SK-N-SH (cell line): ENCODE measurements at regions of chr14 and their contacts with region 1.

Region 1: DNA sequence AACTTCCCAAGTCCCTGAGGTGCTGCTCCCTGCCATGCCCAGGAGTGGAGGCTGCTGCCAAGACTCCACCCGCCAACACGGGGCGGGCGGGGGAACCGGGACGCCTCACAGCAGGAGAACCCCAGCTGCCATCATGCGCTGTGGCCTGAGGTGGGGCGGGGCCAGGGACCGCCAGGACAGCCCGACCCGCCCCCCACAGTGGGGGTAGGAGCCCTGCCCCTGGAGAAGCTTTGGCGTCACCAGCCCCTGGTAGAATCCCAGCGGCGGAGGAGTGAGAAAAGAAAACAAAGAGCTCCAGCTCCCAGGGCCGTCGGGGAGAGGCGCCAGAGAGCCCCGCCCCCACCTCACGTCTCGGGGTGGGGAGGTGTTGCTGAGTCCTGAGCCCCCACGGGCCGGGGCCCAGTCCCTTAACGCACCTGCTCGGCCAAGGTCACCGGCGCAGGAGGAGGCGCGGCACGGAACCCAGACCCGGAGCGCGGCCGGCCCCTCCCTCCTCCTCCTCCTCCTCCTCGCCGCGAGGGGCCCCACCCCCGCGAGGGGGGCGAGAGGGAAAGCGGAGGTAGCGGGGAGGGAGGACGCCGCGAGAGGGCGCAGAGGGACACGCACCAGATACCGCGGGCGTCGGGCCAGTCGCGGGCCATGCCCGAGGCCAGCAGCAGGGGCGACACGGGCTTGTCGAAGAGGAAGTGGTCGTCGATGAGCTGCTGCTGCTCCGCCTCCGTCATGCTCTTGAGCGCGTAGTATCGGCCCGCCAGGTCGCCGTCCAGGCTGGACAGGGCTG is 1.8 kb downstream of the CKB start:
- DNase-seq: peak; percentile 92
- H3K4me3 ChIP-seq: peak overlapping the region; percentile 35 to 57; a peak in 3 of 4 replicates
- H3K27ac ChIP-seq: peak overlapping the region in 1 of 2 experiments; percentile 74; a peak in 2 of 4 replicates
- H3K4me1 ChIP-seq: peaks cover 0 to 20% of the 10 kb centered on the region in 2 experiments; a peak in 1 of 4 replicates
- H3K27me3 ChIP-seq: peaks cover 16% of the 10 kb centered on the region
- CTCF ChIP-seq: peak; percentile 41
- EP300 ChIP-seq: no peak
- RAD21 ChIP-seq: peak; percentile 36; the same call in 1 of the 2 replicates

Region 2: GRCh38 chr14:103488960-103489359 is 31.9 kb before region 1 on chr14:
- CTCF ChIA-PET with region 1: interaction called, 12 read pairs
- POLR2A ChIA-PET with region 1: no interaction called
- DNase-seq: no peak
- H3K4me3 ChIP-seq: no peak overlapping the region
- H3K27ac ChIP-seq: no peak overlapping the region
- H3K4me1 ChIP-seq: peaks cover 0 to 4% of the 10 kb centered on the region in 2 experiments; a peak in 1 of 4 replicates
- H3K27me3 ChIP-seq: no peaks in the 10 kb centered on the region
- CTCF ChIP-seq: no peak
- EP300 ChIP-seq: no peak
- RAD21 ChIP-seq: no peak

Region 3: DNA sequence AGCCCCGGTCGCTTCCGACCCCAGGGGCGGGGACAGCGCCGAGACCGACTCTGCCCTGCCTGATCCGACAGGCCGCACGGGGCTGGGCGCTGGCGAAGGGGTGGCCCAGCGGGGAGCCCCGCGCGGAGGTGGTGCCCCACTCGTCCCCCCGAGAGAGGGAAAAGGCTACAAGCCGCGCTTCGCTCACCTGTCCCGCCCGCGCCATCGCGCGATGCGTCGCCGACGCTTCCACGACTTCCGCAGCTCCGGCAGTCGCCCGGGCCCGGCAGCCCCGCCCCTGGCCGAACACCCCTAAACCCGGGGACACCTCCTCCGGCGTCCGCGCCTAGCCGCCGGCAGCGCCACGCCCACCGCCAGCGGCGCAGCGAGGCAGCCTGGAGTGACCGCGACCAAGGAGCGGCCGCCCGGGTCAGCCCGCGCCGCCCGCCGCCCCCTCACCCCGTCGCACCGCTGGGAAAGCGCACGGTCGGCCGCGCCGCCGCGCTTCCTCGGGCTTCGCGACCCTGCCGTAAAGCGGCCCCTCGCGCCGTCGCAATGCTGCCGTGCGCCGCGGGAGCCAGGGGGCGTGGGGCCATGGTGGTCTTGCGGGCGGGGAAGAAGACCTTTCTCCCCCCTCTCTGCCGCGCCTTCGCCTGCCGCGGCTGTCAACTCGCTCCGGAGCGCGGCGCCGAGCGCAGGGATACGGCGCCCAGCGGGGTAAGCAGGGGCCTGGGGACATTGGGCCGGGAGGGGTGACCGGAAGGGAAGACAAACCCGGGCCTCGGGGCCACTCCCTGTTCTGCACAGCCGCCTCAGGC is 41.8 kb after region 1 on chr14 and contains the starts of genes BAG5 and COA8:
- CTCF ChIA-PET with region 1: interaction called, 13 read pairs
- POLR2A ChIA-PET with region 1: interaction called, 4 read pairs
- DNase-seq: peak; percentile 96
- H3K4me3 ChIP-seq: peak within 1 kb of the TSS; percentile 91 to 92
- H3K27ac ChIP-seq: peak within 1 kb of the TSS; percentile 92
- H3K4me1 ChIP-seq: peaks cover 16 to 19% of the 10 kb centered on the region in 2 experiments; a peak in 3 of 4 replicates
- H3K27me3 ChIP-seq: no peaks in the 10 kb centered on the region
- CTCF ChIP-seq: 0 out of 2 replicates have a peak, but pooled peaks have one; percentile 6
- EP300 ChIP-seq: no peak
- RAD21 ChIP-seq: no peak
- polyA plus RNA-seq, gene BAG5: 5.2 and 5.9 TPM in 2 replicates
- polyA plus RNA-seq, gene COA8: 25.2 and 25.4 TPM in 2 replicates

Region 4: GRCh38 chr14:103715052-103716000 is 194.5 kb after region 1 on chr14 and contains the starts of genes XRCC3 and ZFYVE21:
- CTCF ChIA-PET with region 1: no interaction called
- POLR2A ChIA-PET with region 1: no interaction called
- DNase-seq: peak; percentile 100
- H3K4me3 ChIP-seq: peak within 1 kb of the TSS; percentile 69 to 76
- H3K27ac ChIP-seq: peak within 1 kb of the TSS; percentile 44 to 55
- H3K4me1 ChIP-seq: peaks cover 11 to 39% of the 10 kb centered on the region in 2 experiments; a peak in 2 of 4 replicates
- H3K27me3 ChIP-seq: no peaks in the 10 kb centered on the region
- CTCF ChIP-seq: no peak
- EP300 ChIP-seq: no peak
- RAD21 ChIP-seq: no peak
- polyA plus RNA-seq, gene XRCC3: 10.7 and 11.7 TPM in 2 replicates
- polyA plus RNA-seq, gene ZFYVE21: 82.1 and 85.3 TPM in 2 replicates